B cell (primary cell): ENCODE measurements at regions of chr12 and their contacts with region 1.

Region 1: DNA sequence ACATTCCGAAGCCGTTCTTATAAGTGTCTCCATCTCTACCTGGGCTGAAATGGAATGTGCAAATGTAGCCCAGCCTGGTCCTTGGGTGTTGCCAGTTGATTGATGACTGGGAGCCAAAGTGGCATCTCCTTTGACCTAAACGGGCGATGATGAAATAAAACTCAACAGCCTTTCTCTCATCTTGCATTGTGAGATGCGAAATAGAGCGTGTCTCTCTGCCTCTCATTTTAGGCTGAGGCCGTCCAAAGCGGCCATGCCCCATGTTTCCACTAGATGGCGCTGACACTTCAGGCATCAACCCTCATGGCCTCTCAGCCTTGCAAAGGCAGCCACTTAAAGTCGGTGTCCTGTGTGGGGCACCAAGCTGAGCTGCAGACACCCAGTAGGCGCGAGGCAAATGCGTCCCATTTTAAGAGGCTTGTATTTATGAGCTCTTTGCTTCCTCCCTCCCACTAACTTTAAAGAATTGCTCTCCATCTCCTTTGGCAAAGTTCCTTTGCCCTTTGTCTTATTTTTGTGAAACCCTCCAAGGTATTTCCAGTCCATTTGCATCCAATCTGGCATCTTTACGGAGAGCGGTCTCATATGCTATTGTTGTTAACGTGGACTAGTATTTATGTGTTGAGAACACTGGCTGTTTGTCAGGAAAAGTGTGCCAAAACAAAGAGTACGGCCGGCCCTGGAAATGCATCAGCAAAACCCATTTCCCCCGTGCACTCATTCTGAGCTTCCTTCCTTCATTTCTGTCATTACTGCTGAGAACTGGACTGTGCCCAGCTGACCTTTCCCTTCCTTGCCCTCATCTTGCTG is 25.0 kb downstream of the GPRC5A start:
- DNase-seq: peak; percentile 88
- ATAC-seq: peak; percentile 97
- H3K4me3 ChIP-seq: peak overlapping the region in 1 of 5 experiments; percentile 9
- H3K4me3 Mint-ChIP-seq: no peak overlapping the region
- H3K27ac ChIP-seq: no peak overlapping the region
- H3K27ac Mint-ChIP-seq: no peak overlapping the region
- H3K4me1 ChIP-seq: peaks cover 5 to 9% of the 10 kb centered on the region in 2 donors
- H3K4me1 Mint-ChIP-seq: peaks cover 6% of the 10 kb centered on the region
- H3K27me3 ChIP-seq: peaks cover 0 to 16% (median 6%) of the 10 kb centered on the region in 4 experiments
- H3K27me3 Mint-ChIP-seq: peaks cover 17% of the 10 kb centered on the region
- CTCF ChIP-seq: peak; percentile 94

Region 2: GRCh38 chr12:12568045-12568444 is 348.3 kb before region 1 on chr12:
- CTCF ChIA-PET with region 1: no interaction called
- POLR2A ChIA-PET with region 1: no interaction called
- intact Hi-C with region 1: no loop called
- DNase-seq: no peak
- ATAC-seq: no peak
- H3K4me3 ChIP-seq: no peak overlapping the region
- H3K4me3 Mint-ChIP-seq: no peak overlapping the region
- H3K27ac ChIP-seq: no peak overlapping the region
- H3K27ac Mint-ChIP-seq: no peak overlapping the region
- H3K4me1 ChIP-seq: peaks cover 3 to 4% of the 10 kb centered on the region in 2 donors
- H3K4me1 Mint-ChIP-seq: peaks cover 8% of the 10 kb centered on the region
- H3K27me3 ChIP-seq: no peaks in the 10 kb centered on the region
- H3K27me3 Mint-ChIP-seq: peaks cover 6% of the 10 kb centered on the region
- CTCF ChIP-seq: no peak

Region 3: GRCh38 chr12:13023811-13024530 is 107.6 kb after region 1 on chr12:
- CTCF ChIA-PET with region 1: interaction called, 12 read pairs
- POLR2A ChIA-PET with region 1: no interaction called
- intact Hi-C with region 1: loop called (anchors 1 kb)
- DNase-seq: no peak
- ATAC-seq: no peak
- H3K4me3 ChIP-seq: no peak overlapping the region
- H3K4me3 Mint-ChIP-seq: no peak overlapping the region
- H3K27ac ChIP-seq: no peak overlapping the region
- H3K27ac Mint-ChIP-seq: no peak overlapping the region
- H3K4me1 ChIP-seq: no peaks in the 10 kb centered on the region
- H3K4me1 Mint-ChIP-seq: peaks cover 3% of the 10 kb centered on the region
- H3K27me3 ChIP-seq: peaks cover 0 to 3% (median 1%) of the 10 kb centered on the region in 4 experiments
- H3K27me3 Mint-ChIP-seq: peaks cover 39% of the 10 kb centered on the region
- CTCF ChIP-seq: no peak

Region 4: GRCh38 chr12:13100882-13101769 is 184.8 kb after region 1 on chr12:
- CTCF ChIA-PET with region 1: interaction called, 10 read pairs
- POLR2A ChIA-PET with region 1: no interaction called
- intact Hi-C with region 1: loop called (anchors 1 kb)
- DNase-seq: peak; percentile 97
- ATAC-seq: peak; percentile 77
- H3K4me3 ChIP-seq: peak overlapping the region; percentile 39 to 82 (median 71)
- H3K4me3 Mint-ChIP-seq: peak overlapping the region; percentile 88
- H3K27ac ChIP-seq: peak overlapping the region; percentile 97 to 99
- H3K27ac Mint-ChIP-seq: peak overlapping the region; percentile 96
- H3K4me1 ChIP-seq: peaks cover 52 to 63% of the 10 kb centered on the region in 2 donors
- H3K4me1 Mint-ChIP-seq: peaks cover 62% of the 10 kb centered on the region
- H3K27me3 ChIP-seq: no peaks in the 10 kb centered on the region
- H3K27me3 Mint-ChIP-seq: no peaks in the 10 kb centered on the region
- CTCF ChIP-seq: no peak

Region 5: GRCh38 chr12:13233830-13234641 is 317.7 kb after region 1 on chr12:
- CTCF ChIA-PET with region 1: interaction called, 24 read pairs
- POLR2A ChIA-PET with region 1: no interaction called
- intact Hi-C with region 1: loop called (anchors 1 kb)
- DNase-seq: peak; percentile 47
- ATAC-seq: peak; percentile 47
- H3K4me3 ChIP-seq: no peak overlapping the region
- H3K4me3 Mint-ChIP-seq: no peak overlapping the region
- H3K27ac ChIP-seq: no peak overlapping the region
- H3K27ac Mint-ChIP-seq: no peak overlapping the region
- H3K4me1 ChIP-seq: no peaks in the 10 kb centered on the region
- H3K4me1 Mint-ChIP-seq: no peaks in the 10 kb centered on the region
- H3K27me3 ChIP-seq: no peaks in the 10 kb centered on the region
- H3K27me3 Mint-ChIP-seq: peaks cover 13% of the 10 kb centered on the region
- CTCF ChIP-seq: peak; percentile 75

Region 6: GRCh38 chr12:13864081-13864673 is 947.8 kb after region 1 on chr12:
- CTCF ChIA-PET with region 1: no interaction called
- POLR2A ChIA-PET with region 1: no interaction called
- intact Hi-C with region 1: loop called (anchors 10 kb)
- DNase-seq: peak; percentile 73
- ATAC-seq: peak; percentile 82
- H3K4me3 ChIP-seq: no peak overlapping the region
- H3K4me3 Mint-ChIP-seq: no peak overlapping the region
- H3K27ac ChIP-seq: no peak overlapping the region
- H3K27ac Mint-ChIP-seq: no peak overlapping the region
- H3K4me1 ChIP-seq: no peaks in the 10 kb centered on the region
- H3K4me1 Mint-ChIP-seq: no peaks in the 10 kb centered on the region
- H3K27me3 ChIP-seq: peaks cover 0 to 16% (median 3%) of the 10 kb centered on the region in 4 experiments
- H3K27me3 Mint-ChIP-seq: peaks cover 52% of the 10 kb centered on the region
- CTCF ChIP-seq: peak; percentile 99